ENCODE measurements at regions of chr6 and their contacts with region 1.

Region 1: DNA sequence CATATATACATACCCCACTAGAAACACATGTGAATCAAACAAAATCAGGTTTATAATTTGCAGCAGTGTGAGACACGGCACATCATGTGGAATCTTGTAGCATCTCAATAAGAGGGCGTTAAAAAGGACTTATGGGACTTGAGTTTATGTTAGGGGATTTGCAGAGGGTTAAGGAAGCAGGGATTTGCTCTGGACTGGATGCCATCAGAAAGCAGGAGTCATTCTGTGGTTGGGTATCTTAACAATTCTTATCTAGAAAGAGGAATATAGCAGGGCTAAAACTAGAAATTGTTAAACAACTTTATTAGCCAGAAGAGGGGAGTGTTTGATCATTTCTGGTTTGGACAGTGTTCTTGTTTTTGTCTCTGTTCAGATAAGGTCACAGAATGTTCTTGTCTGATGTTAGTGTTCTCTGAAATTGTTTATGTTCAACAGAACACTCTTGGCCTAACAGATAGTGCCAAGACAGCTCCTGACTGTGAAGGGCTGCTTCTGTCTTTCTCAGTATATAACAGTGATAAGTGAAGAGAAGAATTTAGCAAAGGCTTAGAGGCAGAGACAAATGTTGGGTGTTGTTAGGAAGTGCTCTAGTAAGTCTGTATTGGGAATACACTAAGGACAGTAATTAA is 39.2 kb downstream of the LIN28B start:
- DNase-seq: peak; percentile 72
- H3K4me3 ChIP-seq: no peak overlapping the region
- H3K27ac ChIP-seq: no peak overlapping the region
- H3K4me1 ChIP-seq: no peaks in the 10 kb centered on the region
- H3K27me3 ChIP-seq: no peaks in the 10 kb centered on the region
- CTCF ChIP-seq: peak in 1 of 2 donors; percentile 14
- POLR2A ChIP-seq: no peak

Region 2: DNA sequence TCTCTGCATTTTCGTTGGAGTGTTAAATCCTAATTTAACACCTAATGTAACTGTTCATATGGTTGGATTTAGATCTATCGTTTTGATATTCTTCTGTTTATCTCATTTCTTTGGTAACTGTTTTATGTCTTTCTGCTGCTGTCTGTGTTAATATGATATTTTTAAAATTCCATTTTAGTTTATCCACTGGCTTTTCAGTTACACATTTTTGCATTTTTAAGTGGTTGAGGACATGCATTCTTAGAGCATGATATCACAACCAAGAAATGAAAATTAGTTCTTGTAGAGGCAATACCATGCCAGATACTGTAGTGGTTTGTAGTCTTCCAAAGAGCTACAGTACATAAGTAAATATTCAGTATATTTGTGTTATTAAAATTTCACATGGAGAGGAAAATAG is 19.4 kb after region 1 on chr6:
- CTCF ChIA-PET with region 1: interaction called, 11 read pairs
- POLR2A ChIA-PET with region 1: no interaction called
- dilution Hi-C with region 1: no loop called
- intact Hi-C with region 1: no loop called
- DNase-seq: no peak
- H3K4me3 ChIP-seq: no peak overlapping the region
- H3K27ac ChIP-seq: no peak overlapping the region
- H3K4me1 ChIP-seq: peaks cover 4% of the 10 kb centered on the region
- H3K27me3 ChIP-seq: no peaks in the 10 kb centered on the region
- CTCF ChIP-seq: no peak
- POLR2A ChIP-seq: no peak

Region 3: DNA sequence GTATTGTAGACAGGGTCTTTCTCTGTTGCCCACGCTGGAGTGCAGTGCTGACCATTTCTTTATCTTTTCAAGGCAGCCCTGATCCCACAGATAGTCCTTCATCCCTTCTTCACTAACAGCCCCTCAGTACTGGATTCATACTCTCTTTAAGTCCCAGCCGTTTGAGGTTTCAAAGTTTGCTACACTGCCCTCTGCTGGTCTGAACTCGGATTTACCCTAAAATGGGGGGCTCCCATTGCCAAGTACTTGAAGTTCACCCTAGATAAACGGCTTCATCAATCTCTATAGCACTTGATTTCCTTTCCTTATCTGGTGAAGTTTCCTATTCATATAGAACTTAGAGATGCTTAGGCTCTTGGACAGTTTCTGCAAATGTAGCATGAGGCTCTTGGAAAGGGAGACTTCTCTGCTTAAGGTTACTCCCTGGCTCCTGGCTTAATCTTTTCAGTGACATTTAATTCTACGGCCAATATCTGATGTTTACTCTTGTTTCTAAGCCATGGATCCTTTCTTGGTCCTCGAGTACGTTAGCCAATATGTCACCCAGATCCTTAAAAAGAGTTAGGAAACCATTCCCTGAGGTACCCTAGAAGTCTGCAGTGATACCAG is 428.2 kb after region 1 on chr6:
- CTCF ChIA-PET with region 1: no interaction called
- POLR2A ChIA-PET with region 1: no interaction called
- dilution Hi-C with region 1: no loop called
- intact Hi-C with region 1: loop called (anchors 5 kb)
- DNase-seq: peak; percentile 79
- H3K4me3 ChIP-seq: no peak overlapping the region
- H3K27ac ChIP-seq: no peak overlapping the region
- H3K4me1 ChIP-seq: peaks cover 13% of the 10 kb centered on the region
- H3K27me3 ChIP-seq: peaks cover 1 to 3% of the 10 kb centered on the region in 2 experiments
- CTCF ChIP-seq: peak; percentile 57 to 69
- POLR2A ChIP-seq: no peak